AG04450 (cell line): ENCODE measurements at regions of chr1 and their contacts with region 1.

Region 1: GRCh38 chr1:93814059-93814794 is 64.8 kb downstream of the DNTTIP2 start:
- DNase-seq: peak; percentile 53
- H3K4me3 ChIP-seq: no peak overlapping the region
- H3K27ac ChIP-seq: no peak overlapping the region
- H3K27me3 ChIP-seq: no peaks in the 10 kb centered on the region
- CTCF ChIP-seq: peak; percentile 99

Region 2: GRCh38 chr1:93579891-93580290 is 234.3 kb before region 1 on chr1:
- CTCF ChIA-PET with region 1: interaction called, 10 read pairs
- POLR2A ChIA-PET with region 1: no interaction called
- DNase-seq: peak; percentile 89
- H3K4me3 ChIP-seq: no peak overlapping the region
- H3K27ac ChIP-seq: peak overlapping the region; percentile 73
- H3K27me3 ChIP-seq: no peaks in the 10 kb centered on the region
- CTCF ChIP-seq: no peak

Region 3: GRCh38 chr1:93680757-93681550 is 133.3 kb before region 1 on chr1:
- CTCF ChIA-PET with region 1: interaction called, 19 read pairs
- POLR2A ChIA-PET with region 1: interaction called, 4 read pairs
- DNase-seq: peak; percentile 59
- H3K4me3 ChIP-seq: peak overlapping the region; percentile 78
- H3K27ac ChIP-seq: peak overlapping the region; percentile 91
- H3K27me3 ChIP-seq: no peaks in the 10 kb centered on the region
- CTCF ChIP-seq: peak; percentile 70

Region 4: GRCh38 chr1:93734999-93735398 is 79.2 kb before region 1 on chr1:
- CTCF ChIA-PET with region 1: interaction called, 10 read pairs
- POLR2A ChIA-PET with region 1: interaction called, 6 read pairs
- DNase-seq: no peak
- H3K4me3 ChIP-seq: no peak overlapping the region
- H3K27ac ChIP-seq: no peak overlapping the region
- H3K27me3 ChIP-seq: no peaks in the 10 kb centered on the region
- CTCF ChIP-seq: peak; percentile 44

Region 5: GRCh38 chr1:93798301-93798700 is 15.9 kb before region 1 on chr1:
- CTCF ChIA-PET with region 1: interaction called, 16 read pairs
- POLR2A ChIA-PET with region 1: no interaction called
- DNase-seq: peak; percentile 71
- H3K4me3 ChIP-seq: no peak overlapping the region
- H3K27ac ChIP-seq: no peak overlapping the region
- H3K27me3 ChIP-seq: no peaks in the 10 kb centered on the region
- CTCF ChIP-seq: no peak

Region 6: GRCh38 chr1:93827633-93828366 is 13.6 kb after region 1 on chr1:
- CTCF ChIA-PET with region 1: interaction called, 13 read pairs
- POLR2A ChIA-PET with region 1: no interaction called
- DNase-seq: no peak
- H3K4me3 ChIP-seq: no peak overlapping the region
- H3K27ac ChIP-seq: no peak overlapping the region
- H3K27me3 ChIP-seq: no peaks in the 10 kb centered on the region
- CTCF ChIP-seq: no peak

Region 7: DNA sequence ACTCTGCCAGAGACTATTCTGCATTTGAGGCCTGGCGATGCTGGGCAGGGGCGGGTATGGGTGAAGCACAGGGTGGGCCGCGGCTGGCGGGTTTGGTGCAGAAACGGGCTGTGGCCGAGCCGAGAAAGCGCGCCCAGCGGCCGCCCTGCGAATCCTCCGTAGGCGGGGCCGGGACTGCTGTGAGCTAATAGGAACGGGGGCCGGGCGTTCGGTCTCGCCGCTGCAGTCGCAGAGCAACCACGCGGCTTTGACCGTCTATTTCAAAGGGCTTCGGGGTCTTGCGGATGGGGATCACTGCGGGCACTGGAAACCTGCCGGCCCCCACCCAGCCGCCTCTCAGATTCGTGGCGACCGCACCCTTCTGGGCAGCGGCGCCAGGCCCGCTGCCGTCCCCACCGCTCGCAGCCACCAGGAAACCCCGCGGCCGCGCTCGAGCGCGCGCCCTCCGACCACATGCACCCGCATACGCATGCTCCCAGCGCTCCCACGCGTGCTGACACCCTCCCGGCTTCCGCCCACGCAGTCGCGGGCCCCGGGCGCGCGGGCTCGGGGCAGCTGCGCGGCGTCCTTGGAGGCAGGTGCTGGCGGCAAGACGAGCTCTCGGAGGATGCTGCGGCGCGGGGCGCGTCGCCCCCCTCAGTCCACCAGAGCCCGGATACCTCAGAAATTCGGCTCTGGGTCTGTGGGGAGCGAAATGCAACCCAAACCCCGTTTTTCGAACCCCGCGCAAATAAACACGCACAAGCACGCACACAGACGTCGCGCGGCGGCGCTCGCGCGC is 32.2 kb after region 1 on chr1:
- CTCF ChIA-PET with region 1: interaction called, 67 read pairs
- POLR2A ChIA-PET with region 1: no interaction called
- DNase-seq: peak; percentile 49
- H3K4me3 ChIP-seq: peak overlapping the region; percentile 83
- H3K27ac ChIP-seq: peak overlapping the region; percentile 98
- H3K27me3 ChIP-seq: no peaks in the 10 kb centered on the region
- CTCF ChIP-seq: peak; percentile 45

Region 8: GRCh38 chr1:93865253-93865652 is 51.0 kb after region 1 on chr1:
- CTCF ChIA-PET with region 1: no interaction called
- POLR2A ChIA-PET with region 1: no interaction called
- DNase-seq: no peak
- H3K4me3 ChIP-seq: no peak overlapping the region
- H3K27ac ChIP-seq: no peak overlapping the region
- H3K27me3 ChIP-seq: peaks cover 4% of the 10 kb centered on the region
- CTCF ChIP-seq: no peak

Region 9: DNA sequence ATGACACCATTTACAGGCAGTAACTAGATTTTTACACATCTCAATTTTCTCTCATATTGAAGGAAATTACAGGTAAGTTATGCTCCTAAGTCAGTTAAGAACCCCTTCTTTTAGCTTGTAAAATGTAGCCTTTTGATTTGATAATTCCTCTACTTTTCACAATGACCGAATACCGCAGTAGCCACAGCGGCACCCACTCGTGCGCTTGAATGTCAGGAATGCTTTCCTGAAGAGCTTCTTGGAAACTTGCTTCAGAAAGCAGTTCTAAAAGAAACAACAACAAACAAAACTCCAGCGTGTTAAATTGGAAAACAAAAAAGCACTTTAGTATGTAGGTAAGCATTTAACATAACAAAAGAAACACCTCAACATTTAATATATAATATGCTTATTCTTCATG is 74.7 kb after region 1 on chr1:
- CTCF ChIA-PET with region 1: no interaction called
- POLR2A ChIA-PET with region 1: no interaction called
- DNase-seq: no peak
- H3K4me3 ChIP-seq: no peak overlapping the region
- H3K27ac ChIP-seq: no peak overlapping the region
- H3K27me3 ChIP-seq: no peaks in the 10 kb centered on the region
- CTCF ChIP-seq: no peak